Posterior vena cava (tissue), 2 donors: ENCODE measurements at regions of chr20 and their contacts with region 1.

Region 1: DNA sequence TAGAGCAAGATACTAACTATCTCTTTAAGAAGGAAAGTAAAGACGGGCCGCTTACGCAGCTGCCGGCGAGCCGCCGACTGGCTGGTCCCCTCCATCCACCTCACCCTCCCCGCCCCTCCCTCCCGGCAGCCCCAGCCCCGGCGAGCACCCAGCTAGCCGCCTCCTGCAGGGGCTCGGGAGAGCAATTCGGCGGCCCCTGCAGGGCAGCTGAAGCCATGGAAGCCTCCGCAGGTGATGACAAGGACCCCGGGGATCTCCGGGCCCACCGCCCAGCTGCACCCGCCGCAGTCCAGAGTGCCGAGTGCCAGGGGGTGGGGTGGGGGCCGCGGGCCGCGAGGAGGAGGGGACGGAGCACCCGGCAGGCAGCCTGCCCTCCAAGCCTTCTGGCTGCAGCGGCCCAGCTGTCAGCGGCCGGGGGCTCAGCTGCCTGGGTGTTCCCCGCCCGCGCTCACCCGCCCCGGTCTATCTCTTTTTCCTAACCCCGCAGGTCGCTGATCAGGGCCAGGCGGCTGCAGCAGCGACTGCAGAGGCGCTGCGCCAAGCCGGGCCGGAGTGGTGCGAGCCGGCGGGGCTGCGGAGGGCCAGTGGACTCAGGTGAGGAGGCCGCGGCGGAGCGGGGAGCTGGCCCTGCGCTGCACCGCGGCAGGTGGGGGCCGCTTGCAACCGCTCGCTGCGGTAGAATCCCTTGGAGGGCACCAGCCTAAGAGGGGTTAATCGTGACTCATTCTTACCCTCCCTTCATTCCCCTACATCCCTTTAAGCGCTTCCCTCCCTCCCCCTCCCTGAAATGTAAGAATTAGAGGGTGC is at the start of gene SNPH:
- DNase-seq: peak; percentile 88
- total RNA-seq, gene SNPH: 8.9 to 11.9 TPM

Region 2: DNA sequence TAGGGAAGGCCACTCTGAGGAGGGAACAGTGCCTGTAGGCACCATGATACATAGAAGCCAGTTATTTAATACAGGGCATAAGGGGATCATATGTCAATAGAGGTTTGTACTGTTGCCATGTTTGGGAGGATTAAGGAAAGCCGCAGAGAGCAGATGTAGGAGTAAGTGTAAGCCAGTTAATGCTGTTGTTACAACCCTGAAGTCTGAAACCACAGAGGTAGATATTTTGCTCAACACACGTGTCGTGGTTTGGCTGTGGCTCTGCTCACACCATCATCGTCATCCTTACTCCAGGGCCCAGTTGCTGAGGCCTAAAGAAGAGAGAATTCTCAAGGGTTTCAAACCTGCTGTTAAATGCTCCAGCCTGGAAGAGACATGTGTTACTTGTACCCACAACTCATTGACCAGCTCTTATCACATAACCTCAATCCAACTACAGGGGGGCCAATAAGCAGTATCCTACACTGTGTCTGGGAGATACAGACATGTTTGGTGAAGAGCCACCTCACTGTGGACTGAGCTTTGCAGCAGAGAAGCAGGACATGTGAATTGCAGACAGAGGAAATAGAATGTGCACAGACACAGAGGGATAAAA is 179.0 kb before region 1 on chr20:
- intact Hi-C with region 1: no loop called
- DNase-seq: no peak

Region 3: DNA sequence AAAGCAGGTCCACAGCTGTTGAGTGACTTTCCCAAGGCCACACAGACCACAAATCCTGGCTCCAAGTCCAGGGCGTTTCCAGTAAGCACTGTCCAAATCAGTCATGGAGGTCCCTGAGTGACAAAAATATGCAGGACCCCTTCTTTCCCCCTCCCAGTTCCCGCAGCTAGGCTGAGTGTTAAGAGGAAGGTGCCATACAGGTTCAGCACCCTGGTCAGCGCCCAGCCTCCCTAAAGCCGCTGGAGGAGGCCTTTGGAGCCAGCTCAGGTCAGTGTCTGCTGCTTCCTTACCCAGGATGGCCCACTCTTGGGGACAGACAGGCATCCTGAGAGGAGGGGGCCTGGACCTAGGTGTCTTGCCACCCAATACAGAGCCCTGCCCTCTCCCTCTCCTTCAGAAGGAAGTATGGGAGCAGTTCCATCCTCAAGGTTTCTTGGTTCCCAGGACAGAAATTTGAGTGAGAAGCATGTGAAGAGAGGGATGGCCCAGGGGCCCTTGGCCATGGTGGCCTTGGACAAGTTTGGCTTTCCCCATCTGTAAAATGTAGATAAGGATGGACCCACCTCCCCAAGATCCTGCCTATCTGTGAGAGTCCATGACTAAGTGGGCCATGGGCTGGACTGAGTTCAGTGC is 94.8 kb before region 1 on chr20:
- intact Hi-C with region 1: no loop called
- DNase-seq: no peak

Region 4: GRCh38 chr20:1225783-1226654 is 40.4 kb before region 1 on chr20 and contains the start of gene RAD21L1:
- intact Hi-C with region 1: loop called in 1 of 2 experiments (anchors 2 kb)
- DNase-seq: peak; percentile 93
- total RNA-seq, gene RAD21L1: not detected

Region 5: GRCh38 chr20:1313236-1313964 is 47.0 kb after region 1 on chr20:
- intact Hi-C with region 1: no loop called
- DNase-seq: peak; percentile 87